Mammary epithelial cell (primary cell): ENCODE measurements at regions of chr11 and their contacts with region 1.

Region 1: GRCh38 chr11:62542750-62543567 is 3.6 kb downstream of the AHNAK start:
- DNase-seq: peak; percentile 78
- H3K4me3 ChIP-seq: peak overlapping the region; percentile 82 to 99 (median 91)
- H3K27ac ChIP-seq: peak overlapping the region; percentile 86
- H3K4me1 ChIP-seq: peaks cover 59% of the 10 kb centered on the region
- H3K27me3 ChIP-seq: no peaks in the 10 kb centered on the region
- CTCF ChIP-seq: peak; percentile 78 to 98

Region 2: GRCh38 chr11:62421996-62422395 is 121.0 kb before region 1 on chr11:
- CTCF ChIA-PET with region 1: interaction called, 42 read pairs
- dilution Hi-C with region 1: no loop called
- in situ Hi-C with region 1: no loop called
- intact Hi-C with region 1: loop called (anchors 1 kb)
- DNase-seq: no peak
- H3K4me3 ChIP-seq: no peak overlapping the region
- H3K27ac ChIP-seq: no peak overlapping the region
- H3K4me1 ChIP-seq: peaks cover 4% of the 10 kb centered on the region
- H3K27me3 ChIP-seq: peaks cover 3% of the 10 kb centered on the region
- CTCF ChIP-seq: no peak

Region 3: DNA sequence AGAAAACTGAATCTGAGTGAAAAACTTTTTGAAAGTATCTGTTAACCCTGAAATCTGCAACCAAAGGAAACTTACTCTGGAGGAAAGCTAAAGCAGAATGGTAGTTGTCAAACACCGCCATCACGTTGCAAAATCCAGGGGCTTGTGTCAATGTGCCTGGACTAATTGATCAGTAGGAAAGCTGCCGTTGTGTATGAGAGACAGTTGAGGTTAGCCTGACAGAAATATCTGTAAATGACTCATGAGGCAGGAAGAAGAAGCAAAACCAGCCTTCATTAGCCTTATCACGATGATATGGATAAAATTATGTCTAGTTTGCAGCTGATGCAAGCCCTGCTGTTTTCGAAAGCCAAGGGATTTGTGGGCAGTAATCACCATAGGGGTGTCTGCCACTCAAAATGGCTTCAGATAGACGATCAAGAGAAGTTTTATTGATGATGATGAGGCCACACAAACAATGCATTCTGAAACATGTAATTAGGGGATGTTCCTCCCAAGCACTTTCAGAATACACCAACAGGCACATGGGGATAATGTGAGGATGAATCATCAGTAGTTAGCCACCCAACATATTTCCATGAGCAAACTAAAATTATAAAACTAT is 115.2 kb before region 1 on chr11:
- CTCF ChIA-PET with region 1: interaction called, 42 read pairs
- dilution Hi-C with region 1: no loop called
- in situ Hi-C with region 1: no loop called
- intact Hi-C with region 1: loop called (anchors 1 kb)
- DNase-seq: no peak
- H3K4me3 ChIP-seq: no peak overlapping the region
- H3K27ac ChIP-seq: no peak overlapping the region
- H3K4me1 ChIP-seq: peaks cover 4% of the 10 kb centered on the region
- H3K27me3 ChIP-seq: peaks cover 3% of the 10 kb centered on the region
- CTCF ChIP-seq: no peak

Region 4: GRCh38 chr11:62444236-62444833 is 98.6 kb before region 1 on chr11:
- CTCF ChIA-PET with region 1: no interaction called
- dilution Hi-C with region 1: no loop called
- in situ Hi-C with region 1: loop called in 1 of 2 experiments (anchors 5 kb)
- intact Hi-C with region 1: no loop called
- DNase-seq: no peak
- H3K4me3 ChIP-seq: peak overlapping the region; percentile 18 to 47 (median 39)
- H3K27ac ChIP-seq: no peak overlapping the region
- H3K4me1 ChIP-seq: peaks cover 4% of the 10 kb centered on the region
- H3K27me3 ChIP-seq: no peaks in the 10 kb centered on the region
- CTCF ChIP-seq: no peak

Region 5: GRCh38 chr11:62497132-62497915 is 45.6 kb before region 1 on chr11:
- CTCF ChIA-PET with region 1: interaction called, 4 read pairs
- dilution Hi-C with region 1: loop called (anchors 5 kb)
- in situ Hi-C with region 1: no loop called
- intact Hi-C with region 1: loop called (anchors 1 kb)
- DNase-seq: peak; percentile 84
- H3K4me3 ChIP-seq: no peak overlapping the region
- H3K27ac ChIP-seq: peak overlapping the region; percentile 66
- H3K4me1 ChIP-seq: peaks cover 35% of the 10 kb centered on the region
- H3K27me3 ChIP-seq: no peaks in the 10 kb centered on the region
- CTCF ChIP-seq: peak; percentile 44 to 63